Heart right ventricle (tissue), 16 donors: ENCODE measurements at regions of chr1 and their contacts with region 1.

Region 1: DNA sequence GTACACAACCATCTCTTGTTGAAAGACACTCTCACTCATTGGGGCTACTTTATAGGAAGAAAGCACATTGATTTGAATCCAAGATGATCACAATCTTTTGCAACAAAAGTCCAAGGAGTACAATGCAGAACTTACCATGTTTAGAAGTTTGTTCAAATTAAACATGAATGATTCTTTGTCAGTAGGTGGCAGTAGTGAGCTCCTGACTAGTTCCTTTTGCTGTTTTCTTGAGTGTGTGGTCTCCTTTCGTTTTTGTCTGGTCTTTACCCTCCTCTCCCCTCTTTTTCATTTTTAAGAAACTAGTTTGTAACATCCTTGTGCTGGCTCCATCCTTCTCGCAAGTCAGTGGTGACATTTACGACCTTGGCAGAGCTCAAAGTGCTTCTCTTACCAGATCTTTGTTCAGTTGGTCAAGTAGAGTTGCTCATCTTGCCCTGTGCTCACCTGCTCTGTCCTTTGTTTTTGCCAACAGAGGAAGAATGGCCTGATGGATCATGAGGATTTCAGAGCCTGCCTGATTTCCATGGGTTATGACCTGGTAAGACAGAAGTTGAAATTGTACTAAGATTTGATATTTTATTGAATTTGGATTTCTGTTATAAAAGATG is 35.7 kb upstream of the MTR start:
- DNase-seq: no peak
- ATAC-seq: peak in 1 of 8 donors; percentile 26
- H3K4me3 ChIP-seq: no peak overlapping the region
- H3K27ac ChIP-seq: no peak overlapping the region
- H3K4me1 ChIP-seq: peaks cover 0 to 28% (median 0%) of the 10 kb centered on the region in 9 donors
- H3K27me3 ChIP-seq: no peaks in the 10 kb centered on the region
- CTCF ChIP-seq: peak; percentile 40 to 75 (median 62)

Region 2: GRCh38 chr1:236836157-236836556 is 76.8 kb after region 1 on chr1:
- intact Hi-C with region 1: no loop called
- DNase-seq: no peak
- ATAC-seq: no peak
- H3K4me3 ChIP-seq: no peak overlapping the region
- H3K27ac ChIP-seq: peak overlapping the region in 1 of 10 donors; percentile 24
- H3K4me1 ChIP-seq: peaks cover 0 to 5% (median 0%) of the 10 kb centered on the region in 9 donors
- H3K27me3 ChIP-seq: no peaks in the 10 kb centered on the region
- CTCF ChIP-seq: no peak

Region 3: GRCh38 chr1:237386362-237387143 is 627.2 kb after region 1 on chr1:
- intact Hi-C with region 1: loop called in 1 of 10 experiments (anchors 10 kb)
- DNase-seq: no peak
- ATAC-seq: no peak
- H3K4me3 ChIP-seq: no peak overlapping the region
- H3K27ac ChIP-seq: no peak overlapping the region
- H3K4me1 ChIP-seq: peaks cover 0 to 58% (median 24%) of the 10 kb centered on the region in 9 donors
- H3K27me3 ChIP-seq: no peaks in the 10 kb centered on the region
- CTCF ChIP-seq: peak; percentile 17 to 70 (median 58)

Region 4: DNA sequence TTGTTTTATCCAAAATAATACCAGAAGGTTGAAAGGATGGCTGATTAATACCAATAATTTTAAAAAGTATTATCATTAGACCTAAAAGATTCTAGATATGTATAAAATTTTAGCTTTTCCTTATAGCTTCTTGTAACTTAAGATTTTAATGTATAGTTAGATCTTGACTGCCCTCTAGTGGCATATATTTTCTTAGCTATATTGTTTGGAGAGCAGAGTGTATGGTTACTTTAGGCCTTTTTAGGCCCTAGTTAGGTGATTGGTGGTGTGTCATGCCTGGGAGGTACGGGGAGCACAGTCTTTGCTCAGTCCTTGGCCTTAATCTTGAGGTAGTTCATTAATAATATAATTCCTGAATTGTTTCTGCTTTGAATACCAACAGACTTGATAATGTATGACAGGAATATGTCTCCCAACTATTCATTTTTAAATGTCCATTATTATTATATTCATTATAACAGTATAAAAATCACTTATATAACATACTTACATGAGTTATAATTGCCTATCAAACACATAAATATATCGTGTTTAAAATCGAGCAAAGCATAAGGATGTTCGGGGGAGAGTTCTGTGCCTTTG is 803.0 kb after region 1 on chr1:
- intact Hi-C with region 1: loop called in 1 of 10 experiments (anchors 10 kb)
- DNase-seq: no peak
- ATAC-seq: peak in 1 of 8 donors; percentile 24
- H3K4me3 ChIP-seq: no peak overlapping the region
- H3K27ac ChIP-seq: no peak overlapping the region
- H3K4me1 ChIP-seq: peaks cover 0 to 55% (median 18%) of the 10 kb centered on the region in 9 donors
- H3K27me3 ChIP-seq: no peaks in the 10 kb centered on the region
- CTCF ChIP-seq: peak; percentile 12 to 67 (median 56)